GM10248 (cell line): ENCODE measurements at regions of chr18 and their contacts with region 1.

Region 1: DNA sequence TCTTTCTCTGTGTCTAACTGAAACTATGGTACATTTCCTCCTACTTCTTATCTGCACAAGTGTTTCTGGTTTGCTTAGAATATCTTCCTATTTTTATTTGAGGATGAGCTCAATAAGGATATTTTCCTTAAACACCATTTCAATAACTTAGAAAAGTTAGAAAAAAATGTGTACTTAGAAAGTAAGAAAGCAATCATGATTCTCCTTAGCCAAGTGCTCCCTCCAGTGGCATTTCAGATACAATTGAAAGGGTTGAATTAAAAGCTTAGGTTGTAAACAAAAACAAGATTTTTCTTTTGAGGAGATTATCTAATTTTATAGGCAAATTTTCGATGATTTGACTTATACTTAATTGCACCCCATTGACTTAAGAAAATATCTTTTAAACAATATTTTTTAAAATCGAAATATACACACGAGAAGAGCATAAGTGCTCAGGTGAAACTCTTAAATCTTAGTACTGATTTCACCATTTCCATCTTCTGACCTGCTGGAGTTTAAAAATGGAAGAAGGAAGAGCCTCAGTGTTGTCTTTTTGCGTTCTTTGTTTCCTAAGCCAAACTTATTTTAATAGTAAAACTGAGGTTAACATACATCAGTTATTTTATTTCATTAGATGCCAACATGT is 26.9 kb downstream of the C18orf63 start:
- DNase-seq: peak; percentile 26
- CTCF ChIP-seq: peak; percentile 56

Region 2: DNA sequence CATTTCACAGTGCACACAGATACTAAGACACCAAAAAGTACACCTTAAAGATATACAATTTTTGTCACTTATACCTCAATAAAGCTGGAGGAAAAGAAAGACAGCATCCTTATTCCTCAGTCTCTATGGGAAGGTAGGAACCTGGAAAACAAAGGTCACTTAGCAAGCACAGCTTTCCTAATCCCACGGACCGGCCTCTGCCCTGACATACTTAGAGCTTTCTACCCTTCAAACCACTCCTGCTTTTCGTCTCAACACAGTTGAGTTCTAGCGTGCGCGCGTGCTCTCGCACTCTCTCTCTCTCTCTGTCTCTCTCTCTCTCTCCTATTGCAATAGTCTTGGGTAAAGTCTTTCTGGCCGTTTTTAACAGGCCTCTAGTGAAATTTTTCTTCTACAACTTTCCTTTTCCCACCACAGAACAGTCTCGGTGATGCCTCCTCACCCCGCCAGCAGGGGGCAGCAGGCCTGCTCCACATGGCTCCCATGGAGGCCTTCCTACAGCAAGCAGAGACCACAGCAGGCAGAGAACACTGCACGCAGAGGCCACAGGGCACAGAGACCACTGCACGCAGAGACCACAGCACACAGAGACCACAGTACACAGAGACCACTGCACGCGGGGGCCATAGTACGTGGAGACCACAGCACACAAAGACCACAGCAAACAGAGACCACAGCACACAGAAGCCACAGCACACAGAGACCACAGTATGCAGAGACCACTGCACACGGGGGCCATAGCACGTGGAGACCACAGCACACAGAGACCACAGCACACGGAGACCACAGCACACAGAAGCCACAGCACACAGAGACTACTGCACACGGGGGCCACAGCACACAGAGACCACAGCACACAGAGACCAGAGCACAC is 301.8 kb before region 1 on chr18:
- CTCF ChIA-PET with region 1: interaction called, 10 read pairs
- POLR2A ChIA-PET with region 1: no interaction called
- DNase-seq: peak; percentile 70
- CTCF ChIP-seq: peak; percentile 85

Region 3: DNA sequence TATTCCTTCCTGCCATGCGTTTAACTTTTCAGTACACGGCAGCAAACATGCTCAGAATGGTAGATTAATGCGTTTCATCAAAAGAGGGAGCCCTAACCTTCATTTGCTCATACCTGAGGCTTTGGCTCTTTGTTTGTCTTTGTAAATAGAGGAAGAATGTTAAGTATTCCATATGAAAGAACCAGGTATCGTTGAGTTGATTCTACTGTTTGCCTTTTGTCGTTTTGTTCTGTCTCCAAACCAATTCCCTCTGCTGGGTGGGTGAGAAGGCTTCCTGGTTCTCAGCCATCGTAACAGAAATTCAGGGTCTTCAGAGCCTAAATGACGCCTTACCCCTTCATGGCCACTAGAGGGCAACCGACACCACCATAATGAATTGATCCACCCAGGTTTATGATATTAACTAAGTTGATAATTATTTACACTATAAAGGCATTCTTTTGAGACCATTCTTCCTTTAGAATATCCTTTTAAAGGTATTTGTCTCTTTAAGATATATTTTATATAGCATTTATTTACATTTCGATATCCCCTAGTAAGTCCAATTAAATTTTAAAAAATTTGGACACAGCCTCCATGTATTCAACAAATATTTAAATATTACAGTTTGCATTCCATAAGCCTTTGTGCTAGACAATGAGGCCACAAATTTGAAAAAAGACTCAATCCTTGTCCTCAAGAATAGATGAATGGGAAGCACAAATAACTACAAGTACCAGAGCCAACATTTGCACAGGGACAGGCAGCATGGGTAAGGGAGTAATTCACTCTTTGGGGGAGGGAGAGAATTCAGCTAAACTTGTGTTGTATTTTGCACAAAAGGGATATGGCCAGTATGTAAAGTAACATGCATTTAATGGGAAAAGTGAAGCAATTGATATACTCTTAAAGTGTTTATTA is 146.1 kb before region 1 on chr18:
- CTCF ChIA-PET with region 1: interaction called, 51 read pairs
- POLR2A ChIA-PET with region 1: no interaction called
- DNase-seq: peak; percentile 80
- CTCF ChIP-seq: peak; percentile 88

Region 4: GRCh38 chr18:74242438-74243096 is 100.0 kb before region 1 on chr18:
- CTCF ChIA-PET with region 1: interaction called, 18 read pairs
- POLR2A ChIA-PET with region 1: no interaction called
- DNase-seq: no peak
- CTCF ChIP-seq: peak; percentile 12

Region 5: DNA sequence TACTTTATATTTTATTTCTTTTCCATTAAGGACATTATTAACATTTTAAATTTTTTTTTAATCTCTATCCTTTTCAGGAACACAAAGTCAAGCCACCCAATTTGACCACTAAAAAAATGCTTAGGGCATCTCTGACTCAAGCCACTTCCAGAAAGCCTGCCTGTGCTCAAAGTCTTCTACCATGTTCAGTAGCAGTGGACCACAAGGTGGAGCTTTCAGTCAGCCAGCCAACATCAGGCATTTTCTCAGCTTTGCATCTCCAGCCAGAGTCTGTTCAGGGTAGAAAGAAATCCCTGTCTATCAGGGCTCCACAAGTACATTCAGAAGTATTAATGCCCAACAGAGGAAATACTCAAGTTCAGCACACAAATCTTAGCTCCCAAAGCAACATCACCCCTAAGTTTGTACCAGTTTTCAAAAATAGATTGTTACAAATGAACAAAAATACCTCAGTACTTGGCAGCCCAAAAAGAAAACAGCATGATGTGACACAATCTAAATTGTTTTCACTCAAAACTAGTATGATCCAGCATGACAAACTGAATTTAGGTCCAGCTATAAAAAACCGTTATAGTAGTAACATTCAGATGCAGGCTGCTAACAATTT is 10.7 kb after region 1 on chr18:
- CTCF ChIA-PET with region 1: interaction called, 20 read pairs
- POLR2A ChIA-PET with region 1: no interaction called
- DNase-seq: peak; percentile 37
- CTCF ChIP-seq: peak; percentile 69

Region 6: DNA sequence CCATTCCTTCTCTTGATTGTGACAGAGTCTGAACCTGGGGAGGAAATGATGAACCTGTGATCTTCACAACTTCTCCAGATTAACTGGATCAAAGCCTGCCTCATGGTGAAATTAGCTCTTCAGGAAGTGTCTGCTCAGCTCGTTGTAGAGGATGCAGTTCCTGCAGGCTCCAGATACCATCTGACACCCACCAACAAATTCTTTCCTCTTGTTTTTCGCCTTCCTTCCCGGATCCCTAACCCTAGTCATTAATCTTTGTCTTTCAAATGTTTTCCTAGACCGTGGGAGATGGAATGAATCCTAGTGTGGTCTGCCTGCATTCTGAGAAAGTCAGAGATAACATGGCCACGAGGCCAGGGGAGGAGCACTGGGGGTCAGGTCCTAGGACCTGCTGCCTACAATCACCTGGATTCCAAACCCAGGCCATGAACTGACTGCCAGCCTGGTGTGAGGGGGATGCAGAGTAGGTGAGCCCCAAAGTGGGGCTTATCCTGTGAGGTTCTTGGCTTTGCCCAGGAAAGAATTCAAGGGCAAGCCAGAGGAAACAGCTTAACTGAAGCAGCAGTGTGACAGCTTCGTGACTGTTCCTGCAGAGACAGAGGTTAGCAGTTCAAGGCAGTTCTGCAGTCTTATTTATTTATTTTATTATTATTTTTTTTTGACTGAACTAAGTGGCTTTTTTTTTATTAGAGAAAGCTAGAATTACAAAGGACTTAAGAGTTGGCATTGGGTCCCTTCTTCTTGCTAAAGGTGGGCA is 46.8 kb after region 1 on chr18:
- CTCF ChIA-PET with region 1: no interaction called
- POLR2A ChIA-PET with region 1: no interaction called
- DNase-seq: no peak
- CTCF ChIP-seq: no peak